ENCODE measurements at regions of chr5 and their contacts with region 1.

Region 1: DNA sequence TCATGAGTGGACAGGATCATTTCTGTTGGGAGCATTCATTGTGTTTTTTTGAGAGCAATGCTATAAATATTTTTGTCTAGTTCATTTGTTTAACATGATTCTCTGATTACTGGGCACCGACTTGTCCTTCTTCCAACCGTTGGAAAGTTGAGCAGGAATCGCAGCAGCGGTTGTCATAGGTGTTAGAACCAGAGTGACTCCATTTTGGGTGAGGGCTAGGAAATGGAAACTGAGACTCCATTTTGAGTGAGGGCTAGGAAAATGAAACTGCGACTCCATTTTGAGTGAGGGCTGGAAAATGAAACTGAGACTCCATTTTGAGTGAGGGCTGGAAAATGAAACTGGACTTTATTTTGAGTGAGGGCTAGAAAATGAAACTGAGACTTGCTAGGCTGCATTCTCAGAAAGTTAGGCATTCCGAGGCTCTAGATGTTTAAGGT is 100.6 kb downstream of the ICE1 start:
- DNase-seq: peak; percentile 63
- H3K4me3 Mint-ChIP-seq: peak overlapping the region; percentile 21
- H3K27ac Mint-ChIP-seq: peak overlapping the region; percentile 85
- H3K4me1 Mint-ChIP-seq: peaks cover 32% of the 10 kb centered on the region
- H3K27me3 Mint-ChIP-seq: no peaks in the 10 kb centered on the region

Region 2: DNA sequence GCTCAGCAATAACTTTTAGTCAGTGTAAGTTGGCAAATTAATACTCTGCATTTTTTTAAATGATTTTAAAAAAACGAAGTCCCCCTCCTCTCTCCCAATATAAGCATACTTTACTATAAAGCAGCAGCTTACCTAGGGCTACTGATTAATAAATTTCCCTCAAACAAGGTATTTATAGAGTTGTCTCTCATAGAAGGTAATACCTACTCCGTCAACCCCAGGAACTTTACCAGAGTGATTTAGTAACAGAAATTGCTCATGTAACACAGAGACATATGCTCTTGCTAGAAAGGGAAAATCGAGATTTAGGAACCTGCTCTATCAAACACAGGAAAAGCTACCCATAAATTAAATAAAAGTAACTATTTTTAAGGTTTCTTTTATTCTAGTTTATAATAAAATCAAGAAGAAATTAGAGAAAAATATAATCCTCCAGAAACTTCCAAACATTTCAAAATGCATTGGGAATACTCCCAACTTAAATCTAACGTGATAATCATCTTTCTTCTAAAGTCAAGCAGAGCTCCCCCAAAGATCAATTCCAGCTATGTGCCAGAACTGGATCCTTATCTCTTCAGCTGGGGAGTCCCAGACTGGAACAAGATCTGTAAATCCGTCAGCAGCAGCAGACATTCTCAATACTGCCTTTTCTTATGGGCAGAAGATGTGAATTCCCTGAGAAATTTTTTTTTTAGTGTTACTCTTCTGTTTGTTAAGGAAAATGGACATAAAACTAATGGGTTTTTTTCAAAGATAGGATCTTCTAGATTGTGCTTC is 313.4 kb before region 1 on chr5:
- CTCF ChIA-PET with region 1: no interaction called
- POLR2A ChIA-PET with region 1: interaction called, 11 read pairs
- DNase-seq: no peak
- H3K4me3 Mint-ChIP-seq: no peak overlapping the region
- H3K27ac Mint-ChIP-seq: no peak overlapping the region
- H3K4me1 Mint-ChIP-seq: no peaks in the 10 kb centered on the region
- H3K27me3 Mint-ChIP-seq: no peaks in the 10 kb centered on the region

Region 3: GRCh38 chr5:5235685-5236084 is 287.4 kb before region 1 on chr5:
- CTCF ChIA-PET with region 1: no interaction called
- POLR2A ChIA-PET with region 1: no interaction called
- DNase-seq: no peak
- H3K4me3 Mint-ChIP-seq: no peak overlapping the region
- H3K27ac Mint-ChIP-seq: no peak overlapping the region
- H3K4me1 Mint-ChIP-seq: no peaks in the 10 kb centered on the region
- H3K27me3 Mint-ChIP-seq: no peaks in the 10 kb centered on the region

Region 4: GRCh38 chr5:5432020-5432707 is 90.9 kb before region 1 on chr5:
- CTCF ChIA-PET with region 1: no interaction called
- POLR2A ChIA-PET with region 1: no interaction called
- DNase-seq: no peak
- H3K4me3 Mint-ChIP-seq: no peak overlapping the region
- H3K27ac Mint-ChIP-seq: no peak overlapping the region
- H3K4me1 Mint-ChIP-seq: peaks cover 33% of the 10 kb centered on the region
- H3K27me3 Mint-ChIP-seq: no peaks in the 10 kb centered on the region

Region 5: GRCh38 chr5:5447361-5447760 is 75.7 kb before region 1 on chr5:
- CTCF ChIA-PET with region 1: no interaction called
- POLR2A ChIA-PET with region 1: no interaction called
- DNase-seq: no peak
- H3K4me3 Mint-ChIP-seq: no peak overlapping the region
- H3K27ac Mint-ChIP-seq: no peak overlapping the region
- H3K4me1 Mint-ChIP-seq: no peaks in the 10 kb centered on the region
- H3K27me3 Mint-ChIP-seq: no peaks in the 10 kb centered on the region